PC-3 (cell line): ENCODE measurements at regions of chr6 and their contacts with region 1.

Region 1: DNA sequence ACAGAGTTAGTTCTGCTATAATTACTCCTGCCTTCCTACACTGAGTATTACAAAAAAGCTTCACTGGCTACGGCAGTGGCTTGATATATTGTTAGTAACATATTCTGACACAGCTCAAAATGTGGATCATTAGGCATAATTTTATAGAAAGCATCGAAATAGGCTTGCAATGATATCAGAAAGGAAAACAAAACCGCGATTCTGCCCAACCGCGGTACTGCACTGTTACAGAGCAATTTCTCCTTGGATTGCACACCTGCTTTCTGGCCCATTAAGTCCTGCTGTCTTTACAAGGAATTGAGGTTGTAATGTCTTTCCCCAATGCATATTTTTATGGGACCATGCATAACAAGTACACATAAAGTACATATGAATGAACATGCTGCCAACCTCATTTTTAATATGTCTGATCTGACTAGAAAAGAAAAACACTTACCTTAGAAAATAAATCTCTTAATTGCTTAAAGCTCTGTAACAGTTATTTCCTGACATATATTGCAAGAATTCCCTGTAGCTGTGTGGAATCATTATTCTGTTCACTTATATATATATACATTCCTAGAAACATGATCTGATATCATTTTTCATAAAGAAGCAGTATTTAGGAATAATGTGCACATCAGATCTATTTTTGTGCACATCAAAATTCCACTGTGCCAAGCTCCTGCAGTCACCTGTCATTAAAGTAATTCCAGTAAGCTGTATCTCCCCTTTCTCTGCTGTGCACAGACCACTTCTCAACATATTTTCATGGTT is 763.9 kb downstream of the HACE1 start:
- DNase-seq: no peak
- ATAC-seq: peak; percentile 65
- H3K4me3 ChIP-seq: peak overlapping the region; percentile 64
- H3K27ac ChIP-seq: no peak overlapping the region
- H3K4me1 ChIP-seq: no peaks in the 10 kb centered on the region
- H3K27me3 ChIP-seq: no peaks in the 10 kb centered on the region
- CTCF ChIP-seq: no peak

Region 2: DNA sequence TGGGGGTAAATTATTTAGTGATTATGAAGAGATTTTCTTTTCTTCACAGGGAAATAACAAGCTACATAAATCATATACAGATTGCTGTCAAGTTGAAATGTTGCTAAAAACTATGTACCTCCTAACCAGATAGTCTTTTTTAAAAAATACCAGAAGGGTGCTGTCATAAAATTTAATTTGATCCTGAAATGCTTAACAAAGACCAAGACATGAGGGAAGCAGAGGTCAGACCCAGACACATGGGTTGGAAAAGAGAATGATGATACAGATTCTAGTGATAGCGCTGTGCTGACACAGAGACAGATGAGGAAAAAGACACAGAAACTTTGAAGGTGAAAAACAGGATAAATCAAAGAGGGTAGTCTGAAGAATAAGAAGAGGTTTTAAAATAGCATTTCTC is 190.8 kb after region 1 on chr6:
- CTCF ChIA-PET with region 1: interaction called, 11 read pairs
- POLR2A ChIA-PET with region 1: no interaction called
- intact Hi-C with region 1: no loop called
- DNase-seq: no peak
- ATAC-seq: no peak
- H3K4me3 ChIP-seq: no peak overlapping the region
- H3K27ac ChIP-seq: no peak overlapping the region
- H3K4me1 ChIP-seq: no peaks in the 10 kb centered on the region; the same call in 1 of the 2 replicates
- H3K27me3 ChIP-seq: no peaks in the 10 kb centered on the region
- CTCF ChIP-seq: no peak